ENCODE measurements at regions of chr6 and their contacts with region 1.

Region 1: GRCh38 chr6:25138237-25139125 is 140.7 kb upstream of the CARMIL1 start:
- DNase-seq: peak in 1 of 2 donors; percentile 80
- H3K4me3 ChIP-seq: peak overlapping the region; percentile 54 to 68
- H3K27ac ChIP-seq: peak overlapping the region; percentile 88 to 90
- H3K4me1 ChIP-seq: peaks cover 0 to 7% of the 10 kb centered on the region in 2 donors
- H3K27me3 ChIP-seq: no peaks in the 10 kb centered on the region
- CTCF ChIP-seq: peak in 1 of 3 experiments; percentile 26

Region 2: DNA sequence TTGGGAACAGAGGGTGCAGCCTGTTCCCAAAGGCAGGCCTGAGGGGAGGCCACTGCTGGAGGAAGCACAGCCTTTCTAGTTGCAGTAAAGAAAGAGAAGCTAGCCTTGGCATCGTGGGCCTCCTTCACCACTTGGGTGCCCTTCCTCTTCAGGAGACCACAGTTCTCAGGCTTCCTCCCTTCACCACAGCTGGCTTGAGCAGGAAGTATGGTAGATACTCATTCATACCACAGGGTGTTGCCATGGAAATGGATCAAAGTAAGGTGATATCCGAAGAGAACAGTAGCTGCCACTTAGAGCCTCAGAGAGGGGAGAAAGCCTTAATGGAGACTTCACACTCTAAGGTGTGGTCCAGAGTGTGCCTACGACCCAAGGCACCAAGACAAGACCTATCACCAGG is 82.4 kb before region 1 on chr6:
- intact Hi-C with region 1: no loop called
- DNase-seq: no peak
- H3K4me3 ChIP-seq: no peak overlapping the region
- H3K27ac ChIP-seq: no peak overlapping the region
- H3K4me1 ChIP-seq: no peaks in the 10 kb centered on the region
- H3K27me3 ChIP-seq: no peaks in the 10 kb centered on the region
- CTCF ChIP-seq: no peak

Region 3: DNA sequence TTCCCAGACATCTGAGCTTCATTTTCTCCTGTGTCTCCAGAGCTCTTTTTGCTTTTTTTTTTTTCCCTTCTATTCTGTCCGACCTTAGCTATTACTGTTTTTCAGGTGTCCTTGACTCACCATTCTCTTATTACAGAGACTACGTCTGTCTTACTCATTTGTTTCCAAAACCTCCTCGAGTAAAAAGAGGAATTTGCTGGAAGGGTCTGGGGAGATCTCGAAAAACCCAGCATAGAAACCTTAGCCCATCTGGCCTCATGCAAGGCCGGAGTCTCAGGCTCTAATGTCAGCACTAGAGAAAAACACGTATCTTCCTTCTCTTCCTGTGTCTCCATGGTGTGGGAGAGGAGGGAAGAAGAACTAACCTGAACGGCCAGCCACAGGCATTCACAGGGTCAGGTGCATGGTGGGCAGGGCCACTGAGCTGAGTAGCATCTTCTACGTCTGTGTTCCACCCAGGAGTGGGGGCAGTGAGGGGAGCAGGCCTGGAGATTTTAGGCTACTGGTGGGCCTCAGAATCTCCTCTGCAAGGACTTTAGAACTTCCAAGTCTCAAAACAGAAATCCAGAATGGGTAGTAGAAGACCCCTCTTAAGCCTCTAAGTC is 31.6 kb after region 1 on chr6:
- intact Hi-C with region 1: loop called (anchors 2 kb)
- DNase-seq: no peak
- H3K4me3 ChIP-seq: no peak overlapping the region
- H3K27ac ChIP-seq: peak overlapping the region; percentile 80 to 88
- H3K4me1 ChIP-seq: peaks cover 0 to 36% of the 10 kb centered on the region in 2 donors
- H3K27me3 ChIP-seq: no peaks in the 10 kb centered on the region
- CTCF ChIP-seq: no peak

Region 4: DNA sequence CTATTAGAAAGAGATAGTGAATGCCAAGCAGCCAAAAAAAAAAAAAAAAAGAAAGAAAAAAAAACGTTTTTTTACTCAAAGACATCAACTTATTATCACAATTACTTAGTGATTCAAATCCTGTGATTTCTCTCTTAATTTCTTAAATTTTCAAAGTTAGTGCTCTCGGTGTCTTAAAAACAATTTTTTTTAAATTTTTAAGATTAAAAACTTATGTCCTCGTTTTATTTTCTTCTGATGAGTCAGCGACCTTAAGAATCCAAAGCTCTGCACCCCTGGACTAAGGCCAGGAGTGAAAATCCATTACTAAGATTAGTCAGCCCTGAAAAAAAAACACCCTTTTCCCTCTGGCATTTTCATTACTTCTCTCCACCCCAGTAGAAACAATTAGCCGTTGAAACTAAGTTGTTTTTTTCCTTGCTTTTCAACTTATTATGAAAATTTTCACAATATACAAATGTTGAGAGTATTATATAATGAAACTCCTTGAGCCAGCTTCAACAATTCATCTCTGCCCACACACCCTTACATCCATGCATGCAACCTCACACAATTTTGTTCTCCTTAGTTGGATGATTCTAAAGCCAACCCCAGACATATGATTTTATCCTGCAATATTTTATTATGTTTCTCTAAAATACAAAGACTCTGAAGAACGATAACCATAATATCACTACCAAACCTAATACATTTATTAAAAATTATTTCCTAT is 55.1 kb after region 1 on chr6:
- intact Hi-C with region 1: loop called (anchors 5 kb)
- DNase-seq: no peak
- H3K4me3 ChIP-seq: no peak overlapping the region
- H3K27ac ChIP-seq: peak overlapping the region; percentile 87 to 88
- H3K4me1 ChIP-seq: peaks cover 12 to 24% of the 10 kb centered on the region in 2 donors
- H3K27me3 ChIP-seq: no peaks in the 10 kb centered on the region
- CTCF ChIP-seq: no peak

Measured in ascending aorta (tissue), 2 donors.